ENCODE measurements at regions of chr16 and their contacts with region 1.

Region 1: DNA sequence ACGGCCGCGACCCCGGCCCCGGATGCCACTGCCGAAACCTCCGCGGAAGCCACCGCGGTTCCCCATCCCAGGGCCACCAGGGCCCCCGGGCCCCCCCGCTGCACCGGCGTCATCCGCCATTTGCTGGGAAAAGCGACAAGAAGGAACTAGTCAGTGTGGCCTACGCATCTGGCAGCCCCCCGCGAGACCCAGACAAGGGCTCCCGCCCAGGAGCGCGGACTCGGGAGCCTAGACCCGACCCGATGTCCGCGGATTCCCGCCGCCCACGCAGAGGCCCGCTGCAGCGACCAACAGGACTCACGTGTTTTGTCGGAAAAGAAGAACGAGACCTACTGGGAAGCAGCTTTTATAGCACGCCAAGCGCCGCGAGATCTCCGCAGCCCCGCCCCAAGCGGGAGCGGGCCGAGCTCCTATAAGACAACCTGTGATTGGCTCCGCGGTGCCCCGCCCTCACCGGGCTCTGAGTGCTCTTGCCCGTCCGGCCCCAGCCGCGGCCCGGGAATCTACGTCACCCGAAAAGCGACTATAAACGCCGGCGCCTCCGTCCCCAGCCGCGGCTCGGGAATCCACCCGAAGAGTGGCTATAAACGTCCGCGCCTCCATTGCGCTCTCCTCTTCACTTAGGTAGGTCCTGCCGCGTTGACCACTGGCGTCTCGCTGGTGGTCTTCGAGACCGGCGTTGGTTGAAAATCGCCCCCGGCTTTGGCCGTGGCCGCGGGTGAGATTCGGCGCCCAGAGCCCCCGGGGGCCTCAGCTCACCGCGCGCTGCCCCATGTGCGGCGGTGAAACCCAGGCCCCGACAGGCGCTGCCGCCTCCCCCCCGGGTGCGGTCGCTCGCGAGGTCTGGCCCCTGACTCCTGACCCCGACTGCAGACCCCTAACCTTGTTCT is at the start of gene RPS2:
- H3K4me3 ChIP-seq: peak within 1 kb of the TSS; percentile 94
- H3K27ac ChIP-seq: peak within 1 kb of the TSS; percentile 100
- H3K4me1 ChIP-seq: no peaks in the 10 kb centered on the region; the same call in 1 of the 2 replicates
- CTCF ChIP-seq: no peak; the same call in 1 of the 2 replicates

Region 2: GRCh38 chr16:1772736-1773584 is 191.8 kb before region 1 on chr16 and contains the starts of genes EME2 and MRPS34:
- CTCF ChIA-PET with region 1: no interaction called
- POLR2A ChIA-PET with region 1: interaction called, 10 read pairs
- H3K4me3 ChIP-seq: peak within 1 kb of the TSS; percentile 95
- H3K27ac ChIP-seq: peak within 1 kb of the TSS; percentile 94
- H3K4me1 ChIP-seq: peaks cover 9% of the 10 kb centered on the region
- CTCF ChIP-seq: peak; percentile 98

Region 3: GRCh38 chr16:1826691-1827575 is 137.8 kb before region 1 on chr16 and contains the starts of genes FAHD1 and HAGH:
- CTCF ChIA-PET with region 1: no interaction called
- POLR2A ChIA-PET with region 1: interaction called, 10 read pairs
- H3K4me3 ChIP-seq: peak within 1 kb of the TSS; percentile 97
- H3K27ac ChIP-seq: peak within 1 kb of the TSS; percentile 78; the same call in 1 of the 2 replicates
- H3K4me1 ChIP-seq: no peaks in the 10 kb centered on the region
- CTCF ChIP-seq: no peak; the same call in 1 of the 2 replicates

Region 4: DNA sequence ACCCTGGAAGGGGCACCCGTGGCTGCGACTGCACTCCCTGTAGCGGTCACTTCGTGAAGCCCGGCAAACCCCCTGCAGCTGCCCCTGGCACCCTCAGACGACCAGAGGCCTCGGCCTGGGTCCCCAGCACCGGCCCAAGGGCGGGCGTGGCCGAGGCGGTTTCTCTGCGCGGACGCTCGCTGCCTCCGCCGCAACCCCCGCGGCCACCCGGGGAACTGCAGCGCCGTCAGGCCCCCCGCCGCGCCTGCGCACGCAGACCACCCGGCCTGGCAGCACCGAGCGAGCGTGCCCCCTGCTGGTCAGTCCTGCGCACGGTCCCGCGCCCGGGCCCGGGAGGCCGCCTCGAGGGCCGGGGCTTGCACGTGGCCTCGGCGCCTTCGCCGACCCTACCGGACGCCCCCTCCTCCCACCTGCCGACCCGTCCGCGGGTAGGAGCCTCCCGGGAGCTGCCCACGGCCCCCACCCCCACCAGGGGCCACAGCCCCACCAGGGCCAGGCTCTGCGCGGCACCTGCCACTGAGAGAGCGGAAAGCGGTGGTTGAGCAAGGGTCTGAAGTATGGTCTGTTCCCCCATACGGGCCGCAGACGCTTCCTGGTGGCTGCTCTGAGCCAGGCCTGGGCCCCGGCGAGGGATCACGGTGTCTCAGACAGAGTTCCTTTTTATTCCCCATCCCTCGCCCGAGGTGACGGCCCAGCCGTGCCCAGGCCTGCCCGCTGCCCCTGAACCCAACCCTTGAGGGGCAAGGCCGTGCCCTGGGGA is 35.0 kb before region 1 on chr16:
- CTCF ChIA-PET with region 1: no interaction called
- POLR2A ChIA-PET with region 1: interaction called, 13 read pairs
- H3K4me3 ChIP-seq: peak overlapping the region; percentile 44
- H3K27ac ChIP-seq: peak overlapping the region; percentile 16; the same call in 1 of the 2 replicates
- H3K4me1 ChIP-seq: no peaks in the 10 kb centered on the region
- CTCF ChIP-seq: peak; percentile 59; the same call in 1 of the 2 replicates

Region 5: GRCh38 chr16:1950047-1950446 is 14.7 kb before region 1 on chr16:
- CTCF ChIA-PET with region 1: no interaction called
- POLR2A ChIA-PET with region 1: interaction called, 19 read pairs
- H3K4me3 ChIP-seq: no peak overlapping the region
- H3K27ac ChIP-seq: no peak overlapping the region
- H3K4me1 ChIP-seq: no peaks in the 10 kb centered on the region
- CTCF ChIP-seq: no peak

Region 6: DNA sequence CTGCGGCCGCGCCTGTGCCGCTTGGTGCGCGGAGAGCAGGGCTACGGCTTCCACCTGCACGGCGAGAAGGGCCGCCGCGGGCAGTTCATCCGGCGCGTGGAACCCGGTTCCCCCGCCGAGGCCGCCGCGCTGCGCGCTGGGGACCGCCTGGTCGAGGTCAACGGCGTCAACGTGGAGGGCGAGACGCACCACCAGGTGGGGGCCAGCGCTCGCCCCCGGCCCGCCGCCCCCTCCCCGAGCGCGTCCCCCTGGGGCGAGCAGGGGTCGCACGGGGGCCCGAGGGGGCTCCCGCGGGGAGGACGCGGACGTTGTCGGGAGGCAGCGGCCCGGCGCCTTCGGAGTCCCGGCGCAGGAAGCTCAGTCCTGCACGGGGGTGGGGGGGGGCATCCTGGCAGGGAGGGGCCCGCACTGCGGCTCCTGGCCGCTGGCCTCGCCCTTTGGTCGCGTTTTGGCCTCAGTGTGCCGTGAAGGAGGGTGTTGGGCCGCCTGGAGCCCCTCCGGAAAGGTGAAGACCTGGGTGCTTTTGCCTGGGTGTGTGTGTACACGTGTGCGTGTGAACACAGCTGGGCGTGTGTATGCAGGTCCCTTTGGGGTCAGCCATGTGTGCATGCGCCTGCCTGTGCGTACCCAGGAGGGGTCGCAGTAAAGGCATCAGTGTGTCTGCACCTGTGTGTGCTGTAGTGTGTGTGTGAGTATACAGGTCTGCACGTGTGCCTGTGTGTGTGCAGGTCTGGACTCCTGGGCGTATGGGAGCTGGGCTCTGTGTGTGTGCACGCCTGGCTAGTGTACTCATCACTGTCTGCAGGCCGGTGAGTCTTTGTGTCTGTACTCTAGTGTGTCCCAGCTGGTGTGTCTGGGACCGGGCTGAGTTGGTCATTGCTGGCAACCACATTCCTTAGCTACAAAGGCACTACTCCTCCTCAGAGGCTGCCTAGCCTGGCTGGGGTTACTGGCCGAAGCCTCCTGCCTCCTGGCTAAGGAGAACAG is 62.6 kb after region 1 on chr16:
- CTCF ChIA-PET with region 1: no interaction called
- POLR2A ChIA-PET with region 1: no interaction called
- H3K4me3 ChIP-seq: peak overlapping the region; percentile 42
- H3K27ac ChIP-seq: peak overlapping the region; percentile 16; the same call in 1 of the 2 replicates
- H3K4me1 ChIP-seq: peaks cover 3% of the 10 kb centered on the region; the same call in 1 of the 2 replicates
- CTCF ChIP-seq: peak; percentile 77

Measured in HEK293 (cell line).